ENCODE measurements at regions of chr1 and their contacts with region 1.

Region 1: DNA sequence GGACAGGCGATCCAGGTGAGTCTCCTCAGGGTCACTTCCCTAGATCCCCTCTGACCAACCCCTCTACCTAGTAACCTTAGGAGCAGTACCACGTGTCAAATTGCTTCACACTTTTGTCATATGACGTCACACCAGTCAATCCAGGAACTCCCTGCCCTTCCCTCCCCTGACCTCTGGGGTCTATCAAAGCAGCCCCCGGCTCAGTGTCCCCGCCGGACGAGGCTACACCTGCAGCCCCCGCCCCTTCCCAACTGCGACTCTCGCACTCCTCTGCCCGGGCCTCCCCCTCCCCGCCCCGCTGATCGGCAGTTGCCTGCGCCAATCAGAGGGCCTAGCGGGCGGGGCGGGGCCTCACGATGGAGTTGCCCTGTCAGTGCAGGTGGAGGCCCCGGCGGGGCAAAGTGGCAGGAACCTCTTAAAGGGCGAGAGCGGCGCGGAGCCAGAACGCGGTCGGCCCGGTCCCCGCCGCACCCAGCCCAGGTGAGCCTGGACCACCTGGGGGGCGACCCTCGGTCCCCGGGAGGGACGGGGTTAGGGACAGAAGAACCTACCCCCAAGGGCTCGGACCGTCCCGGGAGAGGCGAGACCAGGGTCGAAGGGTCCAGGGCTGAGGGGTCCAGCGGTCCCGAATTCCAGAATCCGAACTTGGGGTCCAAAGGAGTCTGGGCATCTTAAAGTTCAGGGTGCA is 27.5 kb upstream of the EPB41 start:
- DNase-seq: peak; percentile 89
- H3K4me3 Mint-ChIP-seq: peak overlapping the region; percentile 83
- H3K27ac Mint-ChIP-seq: peak overlapping the region; percentile 92
- H3K4me1 Mint-ChIP-seq: peaks cover 45% of the 10 kb centered on the region
- H3K27me3 Mint-ChIP-seq: no peaks in the 10 kb centered on the region

Region 2: DNA sequence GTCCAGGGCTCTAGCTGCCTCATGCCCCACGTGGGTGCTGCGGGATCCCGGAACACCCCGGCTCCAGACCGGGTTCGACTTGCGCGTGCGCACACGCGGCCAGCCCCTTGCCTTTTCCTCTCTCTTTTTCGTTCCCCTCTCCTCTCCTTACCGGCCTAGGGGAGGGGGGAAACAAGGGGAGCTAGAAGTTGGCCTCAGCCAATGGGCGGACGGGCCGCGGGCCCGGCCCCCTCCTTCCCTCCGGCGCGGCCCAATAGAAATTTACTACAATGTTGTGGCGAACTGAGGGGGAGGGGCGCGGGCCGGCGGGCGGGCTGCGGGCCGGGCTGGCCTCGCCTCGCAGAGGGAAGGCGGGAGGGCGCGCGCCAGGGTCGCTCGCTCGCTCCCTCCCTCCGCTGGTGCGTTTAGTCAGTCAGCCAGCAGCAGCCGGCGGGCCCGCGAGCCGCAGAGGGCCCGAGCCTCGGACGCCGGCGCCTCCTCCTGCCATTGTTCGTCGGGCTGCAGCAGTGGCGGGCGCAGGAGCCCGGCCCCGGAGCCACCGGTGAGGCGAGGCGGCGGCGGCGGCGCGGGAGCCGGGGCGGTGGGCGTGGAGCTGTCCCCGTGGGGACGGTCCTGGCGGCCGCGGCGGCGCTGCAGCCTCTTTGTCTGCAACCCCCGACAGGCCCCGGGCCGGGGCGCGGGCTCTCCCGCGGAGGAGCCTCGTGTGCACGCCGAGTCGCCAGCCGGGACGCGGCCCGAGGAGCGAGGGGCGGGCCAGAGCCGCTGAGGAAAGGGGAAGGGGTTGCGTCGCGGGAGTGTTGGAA is 27.6 kb after region 1 on chr1 and contains the start of gene EPB41:
- intact Hi-C with region 1: loop called (anchors 1 kb)
- DNase-seq: peak; percentile 89
- H3K4me3 Mint-ChIP-seq: peak within 1 kb of the TSS; percentile 91
- H3K27ac Mint-ChIP-seq: peak within 1 kb of the TSS; percentile 91
- H3K4me1 Mint-ChIP-seq: peaks cover 37% of the 10 kb centered on the region
- H3K27me3 Mint-ChIP-seq: no peaks in the 10 kb centered on the region
- total RNA-seq, gene EPB41: 62.6 and 68.0 TPM in 2 replicates

Region 3: DNA sequence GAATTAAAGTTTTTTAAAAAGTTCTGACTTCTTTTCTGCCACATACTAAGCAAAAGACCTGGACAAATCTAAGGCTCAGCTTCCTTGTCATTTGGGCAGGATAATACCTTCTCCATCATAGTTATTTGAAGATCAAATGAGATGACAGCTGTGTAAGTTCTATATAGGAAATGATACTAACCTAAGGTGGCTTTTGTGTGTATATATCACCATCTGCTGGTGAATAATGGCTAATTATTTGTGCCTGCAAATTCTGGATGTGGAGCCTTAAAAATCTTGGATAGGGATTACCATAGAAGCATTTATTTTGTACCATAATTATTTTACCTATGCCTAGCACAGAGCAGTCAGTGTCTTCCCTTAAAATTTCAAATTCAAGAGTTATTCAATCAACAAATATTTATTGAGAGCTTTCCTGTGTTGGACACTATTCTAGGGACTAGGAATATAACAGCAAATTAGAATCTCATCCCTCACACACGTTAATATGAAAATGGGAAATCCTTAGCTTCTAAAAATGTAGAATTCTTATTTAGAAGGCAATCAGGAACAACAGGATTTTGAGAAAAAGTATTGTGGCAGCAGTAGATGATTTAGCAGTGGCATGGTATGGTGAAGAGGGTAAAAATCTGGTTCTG is 147.1 kb after region 1 on chr1:
- intact Hi-C with region 1: loop called (anchors 1 kb)
- DNase-seq: no peak
- H3K4me3 Mint-ChIP-seq: no peak overlapping the region
- H3K27ac Mint-ChIP-seq: no peak overlapping the region
- H3K4me1 Mint-ChIP-seq: no peaks in the 10 kb centered on the region
- H3K27me3 Mint-ChIP-seq: no peaks in the 10 kb centered on the region

Region 4: GRCh38 chr1:29124366-29125236 is 237.7 kb after region 1 on chr1:
- intact Hi-C with region 1: loop called (anchors 1 kb)
- DNase-seq: peak; percentile 41
- H3K4me3 Mint-ChIP-seq: peak overlapping the region; percentile 75
- H3K27ac Mint-ChIP-seq: no peak overlapping the region
- H3K4me1 Mint-ChIP-seq: no peaks in the 10 kb centered on the region
- H3K27me3 Mint-ChIP-seq: peaks cover 25% of the 10 kb centered on the region

Region 5: DNA sequence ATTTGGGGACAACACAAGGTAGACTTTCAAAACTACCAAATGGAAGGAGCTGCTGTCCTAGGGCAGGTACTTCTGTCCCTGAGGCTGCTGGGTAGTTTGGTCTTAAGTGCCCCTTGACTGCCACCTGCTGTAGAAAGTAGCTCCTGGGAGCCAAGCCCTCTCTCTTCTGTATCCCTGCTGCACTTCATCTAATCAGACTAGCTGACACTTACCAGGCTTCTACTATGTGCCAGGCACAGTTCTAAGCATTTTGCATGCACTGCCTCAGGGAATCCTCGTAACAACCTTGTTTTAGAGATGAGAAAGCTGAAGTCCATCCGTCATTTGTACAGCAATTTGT is 310.7 kb after region 1 on chr1:
- intact Hi-C with region 1: loop called (anchors 1 kb)
- DNase-seq: peak; percentile 24
- H3K4me3 Mint-ChIP-seq: no peak overlapping the region
- H3K27ac Mint-ChIP-seq: no peak overlapping the region
- H3K4me1 Mint-ChIP-seq: peaks cover 14% of the 10 kb centered on the region
- H3K27me3 Mint-ChIP-seq: no peaks in the 10 kb centered on the region